ENCODE measurements at regions of chr20 and their contacts with region 1.

Region 1: GRCh38 chr20:47725248-47725973 is 59.9 kb downstream of the SULF2 start:
- DNase-seq: peak; percentile 90
- H3K4me3 ChIP-seq: no peak overlapping the region
- H3K27ac ChIP-seq: no peak overlapping the region
- H3K4me1 ChIP-seq: no peaks in the 10 kb centered on the region
- H3K27me3 ChIP-seq: no peaks in the 10 kb centered on the region
- CTCF ChIP-seq: peak; percentile 90 to 91
- POLR2A ChIP-seq: no peak

Region 2: GRCh38 chr20:47677635-47678453 is 47.6 kb before region 1 on chr20:
- CTCF ChIA-PET with region 1: interaction called, 12 read pairs
- POLR2A ChIA-PET with region 1: no interaction called
- dilution Hi-C with region 1: no loop called
- intact Hi-C with region 1: no loop called
- DNase-seq: peak; percentile 43
- H3K4me3 ChIP-seq: no peak overlapping the region
- H3K27ac ChIP-seq: no peak overlapping the region
- H3K4me1 ChIP-seq: no peaks in the 10 kb centered on the region
- H3K27me3 ChIP-seq: no peaks in the 10 kb centered on the region
- CTCF ChIP-seq: peak; percentile 75 to 92
- POLR2A ChIP-seq: no peak

Region 3: GRCh38 chr20:47857566-47858471 is 132.4 kb after region 1 on chr20:
- CTCF ChIA-PET with region 1: interaction called, 4 read pairs
- POLR2A ChIA-PET with region 1: interaction called, 5 read pairs
- dilution Hi-C with region 1: no loop called
- intact Hi-C with region 1: loop called (anchors 1 kb)
- DNase-seq: peak; percentile 38
- H3K4me3 ChIP-seq: no peak overlapping the region
- H3K27ac ChIP-seq: no peak overlapping the region
- H3K4me1 ChIP-seq: no peaks in the 10 kb centered on the region
- H3K27me3 ChIP-seq: peaks cover 0 to 9% of the 10 kb centered on the region in 2 experiments
- CTCF ChIP-seq: no peak
- POLR2A ChIP-seq: no peak

Region 4: GRCh38 chr20:48002227-48002970 is 277.0 kb after region 1 on chr20:
- CTCF ChIA-PET with region 1: no interaction called
- POLR2A ChIA-PET with region 1: no interaction called
- dilution Hi-C with region 1: no loop called
- intact Hi-C with region 1: no loop called
- DNase-seq: no peak
- H3K4me3 ChIP-seq: no peak overlapping the region
- H3K27ac ChIP-seq: no peak overlapping the region
- H3K4me1 ChIP-seq: no peaks in the 10 kb centered on the region
- H3K27me3 ChIP-seq: no peaks in the 10 kb centered on the region
- CTCF ChIP-seq: no peak
- POLR2A ChIP-seq: no peak

Region 5: GRCh38 chr20:48329635-48330277 is 604.3 kb after region 1 on chr20:
- CTCF ChIA-PET with region 1: interaction called, 9 read pairs
- POLR2A ChIA-PET with region 1: no interaction called
- dilution Hi-C with region 1: no loop called
- intact Hi-C with region 1: loop called (anchors 1 kb)
- DNase-seq: peak; percentile 38
- H3K4me3 ChIP-seq: no peak overlapping the region
- H3K27ac ChIP-seq: no peak overlapping the region
- H3K4me1 ChIP-seq: no peaks in the 10 kb centered on the region
- H3K27me3 ChIP-seq: peaks cover 9 to 13% of the 10 kb centered on the region in 2 experiments
- CTCF ChIP-seq: peak; percentile 47 to 72
- POLR2A ChIP-seq: no peak

Measured in endothelial cell of umbilical vein (primary cell).